Common myeloid progenitor, CD34-positive (primary cell): ENCODE measurements at regions of chr7 and their contacts with region 1.

Region 1: GRCh38 chr7:27774717-27775328 is 34.9 kb downstream of the TAX1BP1 start:
- DNase-seq: peak; percentile 38 to 69 (median 58)
- H3K4me3 ChIP-seq: no peak overlapping the region
- H3K27ac ChIP-seq: no peak overlapping the region
- H3K4me1 ChIP-seq: no peaks in the 10 kb centered on the region
- H3K27me3 ChIP-seq: no peaks in the 10 kb centered on the region

Region 2: GRCh38 chr7:27745064-27745583 is 29.7 kb before region 1 on chr7:
- CTCF ChIA-PET with region 1: interaction called, 12 read pairs
- POLR2A ChIA-PET with region 1: no interaction called
- DNase-seq: peak; percentile 48 to 69 (median 66)
- H3K4me3 ChIP-seq: peak overlapping the region in 2 of 7 experiments; percentile 22 to 43
- H3K27ac ChIP-seq: peak overlapping the region in 1 of 2 experiments; percentile 28
- H3K4me1 ChIP-seq: peaks cover 5 to 22% (median 14%) of the 10 kb centered on the region in 4 experiments
- H3K27me3 ChIP-seq: no peaks in the 10 kb centered on the region

Region 3: GRCh38 chr7:27808626-27809025 is 33.8 kb after region 1 on chr7:
- CTCF ChIA-PET with region 1: no interaction called
- POLR2A ChIA-PET with region 1: no interaction called
- DNase-seq: no peak
- H3K4me3 ChIP-seq: no peak overlapping the region
- H3K27ac ChIP-seq: no peak overlapping the region
- H3K4me1 ChIP-seq: peaks cover 0 to 3% (median 0%) of the 10 kb centered on the region in 4 experiments
- H3K27me3 ChIP-seq: no peaks in the 10 kb centered on the region